ENCODE measurements at regions of chr3 and their contacts with region 1.

Region 1: DNA sequence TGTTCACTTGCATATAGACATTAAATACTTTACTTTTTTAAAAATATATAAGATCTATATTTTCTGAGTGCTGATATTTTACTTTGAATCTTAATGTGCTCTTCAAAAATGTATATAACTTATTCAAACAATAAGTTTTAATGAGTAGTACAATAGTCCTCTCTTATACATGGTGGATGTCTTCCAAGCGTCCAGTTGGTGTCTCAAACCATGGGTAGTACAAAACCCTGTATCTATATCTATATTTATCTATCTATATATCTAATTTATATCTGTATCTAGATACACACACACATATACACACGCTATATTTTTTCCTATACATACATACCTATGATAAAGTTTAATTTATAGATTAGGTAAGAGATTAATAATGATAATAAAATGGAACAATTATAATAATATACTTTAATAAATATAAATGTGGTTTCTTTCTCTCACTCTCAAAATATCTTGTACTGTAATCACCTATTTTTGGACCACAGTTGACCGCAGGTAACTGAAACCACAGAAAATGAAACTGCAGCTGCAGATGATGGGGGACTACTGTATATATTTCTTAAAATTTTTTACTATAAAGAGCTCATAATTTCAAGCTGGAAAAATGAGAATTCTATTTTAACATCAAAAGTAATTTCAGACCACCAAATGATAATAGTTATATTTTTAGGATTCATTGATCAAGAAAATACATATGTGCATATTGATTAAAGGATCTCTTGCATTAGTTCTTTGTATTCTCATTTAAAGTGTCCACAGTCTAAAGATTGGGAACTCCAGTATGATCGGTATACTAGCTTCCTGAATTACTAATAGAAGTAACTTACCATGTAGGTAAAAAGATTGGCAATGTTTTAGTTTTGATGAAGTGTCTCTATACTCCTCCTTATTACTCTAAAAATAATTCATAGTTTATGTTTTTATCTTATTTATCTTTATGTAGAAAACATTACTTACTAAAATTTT is 215.1 kb upstream of the MLF1 start:
- DNase-seq: no peak
- ATAC-seq: no peak
- H3K4me3 ChIP-seq: no peak overlapping the region
- H3K4me3 Mint-ChIP-seq: peak overlapping the region; percentile 17
- H3K27ac ChIP-seq: no peak overlapping the region
- H3K27ac Mint-ChIP-seq: no peak overlapping the region
- H3K4me1 ChIP-seq: peaks cover 4 to 9% of the 10 kb centered on the region in 2 donors
- H3K4me1 Mint-ChIP-seq: peaks cover 20% of the 10 kb centered on the region
- H3K27me3 ChIP-seq: no peaks in the 10 kb centered on the region
- H3K27me3 Mint-ChIP-seq: no peaks in the 10 kb centered on the region
- CTCF ChIP-seq: no peak

Region 2: DNA sequence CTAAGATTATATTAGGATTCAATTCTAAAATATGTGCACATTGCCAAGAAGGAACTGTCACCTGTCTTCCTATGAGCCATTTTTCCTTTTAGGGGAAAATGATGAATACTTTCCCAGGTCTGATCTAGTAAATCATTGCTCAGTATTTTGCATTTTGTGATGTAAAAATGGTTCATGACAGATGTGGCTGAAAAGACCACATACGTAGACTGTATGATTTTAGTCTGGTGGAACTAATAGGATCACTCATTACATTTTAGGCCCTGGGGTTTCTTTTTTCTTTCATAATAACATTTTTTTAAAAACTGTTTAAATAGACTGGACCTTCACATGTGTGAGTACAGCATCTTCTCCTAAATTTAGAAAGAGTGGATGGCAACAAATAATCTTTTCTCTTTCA is 13.4 kb after region 1 on chr3:
- CTCF ChIA-PET with region 1: no interaction called
- POLR2A ChIA-PET with region 1: no interaction called
- intact Hi-C with region 1: loop called (anchors 1 kb)
- DNase-seq: no peak
- ATAC-seq: no peak
- H3K4me3 ChIP-seq: no peak overlapping the region
- H3K4me3 Mint-ChIP-seq: no peak overlapping the region
- H3K27ac ChIP-seq: no peak overlapping the region
- H3K27ac Mint-ChIP-seq: no peak overlapping the region
- H3K4me1 ChIP-seq: no peaks in the 10 kb centered on the region
- H3K4me1 Mint-ChIP-seq: no peaks in the 10 kb centered on the region
- H3K27me3 ChIP-seq: no peaks in the 10 kb centered on the region
- H3K27me3 Mint-ChIP-seq: no peaks in the 10 kb centered on the region
- CTCF ChIP-seq: no peak

Measured in B cell (primary cell).